ENCODE measurements at regions of chr2 and their contacts with region 1.

Region 1: GRCh38 chr2:201860636-201861066 is 54.3 kb downstream of the CDK15 start:
- DNase-seq: peak in 3 of 6 donors; percentile 12 to 55 (median 30)
- ATAC-seq: peak; percentile 64 to 94 (median 93)
- H3K4me3 ChIP-seq: no peak overlapping the region
- H3K27ac ChIP-seq: no peak overlapping the region
- H3K4me1 ChIP-seq: no peaks in the 10 kb centered on the region
- H3K27me3 ChIP-seq: peaks cover 0 to 3% (median 0%) of the 10 kb centered on the region in 4 donors
- CTCF ChIP-seq: peak; percentile 46 to 74 (median 57)

Region 2: DNA sequence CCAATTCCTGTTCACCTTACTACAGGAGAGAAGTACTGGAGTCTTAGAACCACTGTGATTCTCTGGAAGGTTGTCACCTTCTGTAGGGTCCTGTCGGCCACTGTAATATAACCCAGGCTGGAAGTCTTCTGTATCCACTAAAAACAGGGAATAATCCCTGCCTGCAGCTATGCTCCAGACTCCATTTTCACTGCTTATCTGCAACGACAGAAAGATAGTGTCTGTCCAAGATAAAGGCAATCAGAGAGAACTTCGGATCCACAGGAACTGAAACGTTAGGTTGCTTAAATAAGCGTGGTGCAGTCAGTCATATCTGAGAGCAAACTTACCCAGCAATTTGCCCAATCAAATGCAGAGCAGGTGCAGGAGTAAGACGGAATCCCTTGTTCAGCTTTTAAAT is 114.1 kb before region 1 on chr2:
- intact Hi-C with region 1: no loop called
- DNase-seq: no peak
- ATAC-seq: no peak
- H3K4me3 ChIP-seq: no peak overlapping the region
- H3K27ac ChIP-seq: no peak overlapping the region
- H3K4me1 ChIP-seq: no peaks in the 10 kb centered on the region
- H3K27me3 ChIP-seq: no peaks in the 10 kb centered on the region
- CTCF ChIP-seq: no peak

Region 3: DNA sequence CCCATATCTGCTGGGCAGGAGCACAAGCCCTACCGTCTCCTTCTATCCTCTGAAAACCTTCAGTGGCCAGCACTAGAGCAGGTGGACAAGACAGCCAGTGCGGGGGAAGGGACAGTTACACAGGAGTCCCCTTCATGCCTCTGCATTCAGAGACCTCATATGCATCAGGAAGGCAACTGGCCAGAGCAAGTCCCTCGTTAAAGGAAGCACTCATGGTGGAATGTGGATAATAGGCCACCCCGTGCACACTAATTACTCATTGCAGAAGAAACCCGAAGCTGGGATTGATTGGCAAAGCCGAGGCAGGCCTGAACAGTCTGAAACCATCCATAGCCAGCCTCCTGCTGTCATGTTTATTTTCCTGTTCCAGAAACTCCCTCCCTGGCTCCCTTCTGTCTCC is 223.6 kb after region 1 on chr2:
- intact Hi-C with region 1: no loop called
- DNase-seq: no peak
- ATAC-seq: no peak
- H3K4me3 ChIP-seq: no peak overlapping the region
- H3K27ac ChIP-seq: no peak overlapping the region
- H3K4me1 ChIP-seq: no peaks in the 10 kb centered on the region
- H3K27me3 ChIP-seq: no peaks in the 10 kb centered on the region
- CTCF ChIP-seq: no peak

Region 4: DNA sequence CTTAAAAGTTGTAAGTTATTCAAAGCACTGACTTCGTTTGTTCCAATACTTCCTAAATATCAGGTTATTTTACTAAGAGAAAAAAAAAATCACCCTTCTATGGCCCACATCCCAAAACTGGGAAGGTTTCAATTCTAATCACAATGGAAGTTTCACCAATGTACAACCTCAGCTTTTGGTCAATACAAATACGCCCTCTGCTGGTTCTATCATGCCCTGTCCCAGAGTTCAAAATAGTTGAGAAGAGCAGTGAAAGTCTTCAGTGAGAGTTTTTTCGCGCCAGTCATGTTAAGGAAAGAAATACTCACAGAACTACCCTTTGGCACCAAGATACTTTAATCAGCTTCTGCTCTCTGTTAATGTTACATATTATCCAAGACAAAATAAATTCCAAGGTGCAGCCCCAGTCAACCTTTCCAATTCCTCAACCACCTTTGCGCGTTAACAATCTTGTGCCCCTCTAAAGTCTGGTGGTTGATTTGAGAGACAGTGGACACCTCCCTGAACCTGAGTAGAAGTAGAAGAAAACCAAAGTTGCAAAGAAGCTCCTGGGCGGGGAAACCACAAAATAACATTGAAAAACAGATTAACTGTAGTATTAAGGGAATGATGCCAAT is 317.8 kb after region 1 on chr2:
- intact Hi-C with region 1: loop called in 2 of 3 experiments (anchors 5 kb)
- DNase-seq: peak in 3 of 6 donors; percentile 26 to 59 (median 27)
- ATAC-seq: peak; percentile 53 to 93 (median 86)
- H3K4me3 ChIP-seq: no peak overlapping the region
- H3K27ac ChIP-seq: no peak overlapping the region
- H3K4me1 ChIP-seq: no peaks in the 10 kb centered on the region
- H3K27me3 ChIP-seq: peaks cover 0 to 4% (median 0%) of the 10 kb centered on the region in 4 donors
- CTCF ChIP-seq: peak; percentile 53 to 72 (median 65)